PC-9 (cell line): ENCODE measurements at regions of chr1 and their contacts with region 1.

Region 1: GRCh38 chr1:61453111-61453961 is 271.6 kb downstream of the TM2D1 start:
- DNase-seq: peak; percentile 82 to 87
- H3K4me3 ChIP-seq: no peak overlapping the region
- H3K27ac ChIP-seq: peak overlapping the region; percentile 17; the same call in 1 of the 2 replicates
- H3K4me1 ChIP-seq: peaks cover 22% of the 10 kb centered on the region
- H3K27me3 ChIP-seq: no peaks in the 10 kb centered on the region
- CTCF ChIP-seq: peak; percentile 79

Region 2: GRCh38 chr1:60510162-60510561 is 943.2 kb before region 1 on chr1:
- CTCF ChIA-PET with region 1: no interaction called
- POLR2A ChIA-PET with region 1: no interaction called
- intact Hi-C with region 1: no loop called
- DNase-seq: no peak
- H3K4me3 ChIP-seq: no peak overlapping the region
- H3K27ac ChIP-seq: no peak overlapping the region
- H3K4me1 ChIP-seq: no peaks in the 10 kb centered on the region
- H3K27me3 ChIP-seq: no peaks in the 10 kb centered on the region
- CTCF ChIP-seq: no peak

Region 3: GRCh38 chr1:60848583-60849188 is 604.6 kb before region 1 on chr1:
- CTCF ChIA-PET with region 1: no interaction called
- POLR2A ChIA-PET with region 1: no interaction called
- intact Hi-C with region 1: loop called (anchors 1 kb)
- DNase-seq: peak in 1 of 2 experiments; percentile 8
- H3K4me3 ChIP-seq: no peak overlapping the region
- H3K27ac ChIP-seq: no peak overlapping the region
- H3K4me1 ChIP-seq: no peaks in the 10 kb centered on the region
- H3K27me3 ChIP-seq: no peaks in the 10 kb centered on the region
- CTCF ChIP-seq: peak; percentile 87

Region 4: DNA sequence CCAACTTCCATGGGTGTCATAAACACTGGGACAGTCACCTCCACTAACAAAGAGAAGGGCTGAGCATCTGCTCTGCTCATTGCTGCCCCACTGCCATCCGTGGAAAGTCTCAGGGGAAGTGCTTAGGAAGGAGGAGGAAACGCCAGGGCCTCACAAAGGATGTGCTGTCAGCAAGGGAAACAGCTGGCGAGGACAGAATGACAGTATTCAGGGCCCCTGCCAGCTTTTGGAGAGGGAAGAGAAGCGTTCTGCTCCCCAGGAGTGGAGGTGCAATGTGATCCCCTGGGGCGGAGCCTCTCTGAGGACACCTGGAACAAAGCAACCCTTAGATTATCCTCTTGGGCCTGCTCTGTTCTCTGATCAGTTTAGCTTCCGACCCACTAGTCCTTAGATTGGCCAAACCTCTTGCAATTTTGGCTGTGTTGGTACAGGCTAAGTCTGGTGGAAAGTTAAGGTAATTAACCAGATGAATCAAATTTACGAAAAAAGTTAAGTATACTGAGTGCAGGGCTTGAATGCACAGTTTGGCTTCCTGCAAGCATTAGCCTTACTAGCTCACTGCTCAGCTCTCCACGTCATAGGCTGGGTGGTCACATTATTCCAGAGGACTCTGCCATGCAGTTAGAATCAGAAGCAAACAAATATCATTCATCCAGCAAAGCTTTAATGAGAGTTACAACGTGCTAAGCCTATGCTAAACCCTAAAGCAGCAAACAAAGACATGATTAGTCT is 541.2 kb before region 1 on chr1:
- CTCF ChIA-PET with region 1: no interaction called
- POLR2A ChIA-PET with region 1: no interaction called
- intact Hi-C with region 1: no loop called
- DNase-seq: no peak
- H3K4me3 ChIP-seq: no peak overlapping the region
- H3K27ac ChIP-seq: no peak overlapping the region
- H3K4me1 ChIP-seq: no peaks in the 10 kb centered on the region
- H3K27me3 ChIP-seq: no peaks in the 10 kb centered on the region
- CTCF ChIP-seq: no peak

Region 5: GRCh38 chr1:61049850-61050540 is 403.3 kb before region 1 on chr1:
- CTCF ChIA-PET with region 1: no interaction called
- POLR2A ChIA-PET with region 1: no interaction called
- intact Hi-C with region 1: loop called (anchors 1 kb)
- DNase-seq: peak; percentile 77 to 91
- H3K4me3 ChIP-seq: peak overlapping the region; percentile 88
- H3K27ac ChIP-seq: no peak overlapping the region
- H3K4me1 ChIP-seq: peaks cover 4% of the 10 kb centered on the region; the same call in 1 of the 2 replicates
- H3K27me3 ChIP-seq: no peaks in the 10 kb centered on the region
- CTCF ChIP-seq: peak; percentile 93

Region 6: DNA sequence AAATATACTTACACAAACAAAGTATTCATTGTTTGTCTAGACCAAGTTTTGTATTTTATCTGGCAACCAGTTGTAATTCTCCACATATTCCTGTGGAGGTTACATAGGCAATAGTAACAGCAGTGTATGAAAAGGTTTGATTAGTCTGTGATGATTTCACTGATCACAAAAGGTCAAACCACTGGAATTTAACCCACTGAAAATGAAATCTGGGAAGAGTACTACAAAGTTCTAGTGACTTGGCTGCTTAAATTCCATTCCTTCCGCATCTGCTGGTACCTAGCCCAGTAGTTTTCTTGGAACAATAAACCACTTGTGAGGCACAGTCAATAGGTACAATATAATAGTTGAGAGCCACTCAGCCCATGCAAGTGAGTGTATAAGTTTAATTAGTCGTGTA is 165.6 kb before region 1 on chr1:
- CTCF ChIA-PET with region 1: no interaction called
- POLR2A ChIA-PET with region 1: no interaction called
- intact Hi-C with region 1: loop called (anchors 1 kb)
- DNase-seq: peak in 1 of 2 experiments; percentile 60
- H3K4me3 ChIP-seq: no peak overlapping the region
- H3K27ac ChIP-seq: peak overlapping the region; percentile 17; the same call in 1 of the 2 replicates
- H3K4me1 ChIP-seq: peaks cover 42% of the 10 kb centered on the region
- H3K27me3 ChIP-seq: no peaks in the 10 kb centered on the region
- CTCF ChIP-seq: no peak

Region 7: DNA sequence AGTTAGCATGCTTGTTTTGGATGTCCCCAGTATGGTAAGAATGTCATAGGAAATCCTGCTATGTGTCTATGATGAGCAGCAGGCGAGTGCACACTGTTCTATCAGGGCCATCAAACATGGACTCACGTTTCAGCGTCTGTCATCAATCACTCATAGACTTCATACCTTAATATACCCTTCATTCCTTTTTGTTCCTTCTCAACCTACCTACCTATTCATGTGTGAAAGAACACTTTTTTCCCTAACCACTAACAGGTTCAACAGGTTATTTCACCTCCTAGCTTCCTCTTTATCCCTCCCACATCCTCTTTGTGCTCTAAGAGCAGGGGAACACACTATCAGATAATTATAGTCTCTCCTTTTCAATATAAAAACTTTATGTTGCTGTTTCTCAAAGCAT is 29.0 kb before region 1 on chr1:
- CTCF ChIA-PET with region 1: no interaction called
- POLR2A ChIA-PET with region 1: no interaction called
- intact Hi-C with region 1: loop called (anchors 1 kb)
- DNase-seq: peak; percentile 34 to 94
- H3K4me3 ChIP-seq: no peak overlapping the region
- H3K27ac ChIP-seq: peak overlapping the region; percentile 56
- H3K4me1 ChIP-seq: peaks cover 33% of the 10 kb centered on the region
- H3K27me3 ChIP-seq: no peaks in the 10 kb centered on the region
- CTCF ChIP-seq: no peak

Region 8: DNA sequence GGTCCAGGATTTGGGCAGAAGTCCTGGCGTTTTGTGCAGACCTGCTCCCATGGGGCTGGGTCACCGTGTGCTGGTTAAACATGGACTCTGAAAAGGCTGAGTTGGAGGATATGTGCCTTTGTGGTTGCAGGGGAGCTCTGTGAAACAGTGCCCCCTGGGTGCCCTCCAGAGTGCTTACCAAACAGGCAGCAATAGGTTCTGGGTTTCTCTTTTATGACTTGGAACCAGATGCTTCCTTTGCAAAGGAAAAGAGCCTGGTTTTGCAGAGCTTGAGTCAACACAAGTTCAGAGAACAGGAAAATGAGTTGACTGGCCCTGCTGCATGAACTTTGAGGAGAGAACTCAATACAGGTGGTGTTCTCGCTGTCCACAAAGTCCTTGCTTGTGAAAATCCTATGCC is 17.3 kb before region 1 on chr1:
- CTCF ChIA-PET with region 1: no interaction called
- POLR2A ChIA-PET with region 1: no interaction called
- intact Hi-C with region 1: no loop called
- DNase-seq: no peak
- H3K4me3 ChIP-seq: no peak overlapping the region
- H3K27ac ChIP-seq: no peak overlapping the region
- H3K4me1 ChIP-seq: no peaks in the 10 kb centered on the region
- H3K27me3 ChIP-seq: no peaks in the 10 kb centered on the region
- CTCF ChIP-seq: no peak

Region 9: DNA sequence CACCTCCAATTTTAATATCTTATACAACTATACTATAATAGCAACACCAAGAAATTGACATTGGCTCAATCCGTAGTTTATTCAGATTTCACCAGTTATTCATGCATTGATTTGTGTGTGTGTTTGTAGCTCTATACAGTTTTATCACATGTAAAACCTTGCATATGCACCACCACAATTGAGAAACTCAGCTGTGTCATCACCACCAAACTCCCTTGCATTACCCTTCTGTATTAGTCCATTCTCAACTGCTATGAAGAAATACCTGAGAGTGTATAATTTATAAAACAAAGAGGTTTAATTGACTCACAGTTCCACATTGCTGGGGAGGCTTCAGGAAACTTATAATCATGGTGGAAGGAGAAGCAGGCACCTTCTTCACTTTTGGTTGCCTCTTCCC is 451.0 kb after region 1 on chr1:
- CTCF ChIA-PET with region 1: no interaction called
- POLR2A ChIA-PET with region 1: interaction called, 32 read pairs
- intact Hi-C with region 1: no loop called
- DNase-seq: no peak
- H3K4me3 ChIP-seq: no peak overlapping the region
- H3K27ac ChIP-seq: no peak overlapping the region
- H3K4me1 ChIP-seq: no peaks in the 10 kb centered on the region
- H3K27me3 ChIP-seq: no peaks in the 10 kb centered on the region
- CTCF ChIP-seq: no peak